CD8-positive, alpha-beta T cell (primary cell): ENCODE measurements at regions of chr1 and their contacts with region 1.

Region 1: DNA sequence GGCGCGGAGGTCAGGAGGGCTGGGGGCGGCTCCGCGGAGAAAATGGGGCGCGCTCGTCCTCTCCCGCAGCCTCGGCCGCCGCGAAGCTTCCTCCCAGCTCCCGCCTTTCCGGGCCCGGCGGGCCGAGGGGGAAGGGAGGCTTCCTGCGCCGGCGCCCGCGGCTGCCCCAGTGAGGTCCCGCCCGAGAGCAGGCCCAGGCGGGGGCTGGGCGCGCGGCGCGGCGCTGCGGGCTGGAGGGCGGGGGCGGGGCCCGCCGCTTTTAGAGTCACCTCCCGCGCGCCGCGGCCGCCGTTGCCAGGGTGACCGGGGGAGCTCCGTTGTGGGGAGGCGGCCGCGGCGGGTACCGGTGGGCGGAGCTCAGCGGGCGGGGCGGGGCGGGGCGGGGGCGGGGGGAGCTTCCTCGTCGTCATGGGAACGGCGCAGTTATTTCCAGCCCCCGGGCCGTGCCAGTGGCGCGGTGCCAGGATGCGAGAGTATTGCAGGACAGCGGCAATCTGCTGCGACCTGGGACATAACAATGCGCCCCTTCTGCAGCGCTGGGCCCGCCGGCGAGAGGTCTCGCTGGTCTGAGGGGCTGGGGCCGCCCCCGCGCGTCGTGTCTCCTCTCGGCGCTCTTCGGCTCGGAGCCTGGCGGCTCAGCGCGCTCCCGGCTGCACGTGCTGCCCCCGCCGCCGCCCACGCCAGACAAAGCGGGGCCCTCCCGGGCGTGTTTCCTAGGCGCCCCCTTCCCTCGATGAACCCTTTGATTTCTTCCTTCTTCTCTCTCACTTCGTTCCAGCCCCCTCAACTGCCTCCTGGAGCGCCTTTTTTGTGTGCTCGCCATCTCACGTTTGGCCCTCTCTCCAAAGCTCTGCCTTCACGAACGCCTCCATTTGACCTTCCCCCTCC is 16.9 kb downstream of the IER5 start:
- DNase-seq: peak; percentile 80 to 96 (median 94)
- ATAC-seq: peak; percentile 85
- H3K4me3 ChIP-seq: peak overlapping the region; percentile 61 to 76
- H3K4me3 Mint-ChIP-seq: peak overlapping the region; percentile 90
- H3K27ac ChIP-seq: peak overlapping the region; percentile 52 to 74
- H3K27ac Mint-ChIP-seq: peak overlapping the region; percentile 91
- H3K4me1 ChIP-seq: peaks cover 25% of the 10 kb centered on the region
- H3K4me1 Mint-ChIP-seq: peaks cover 40% of the 10 kb centered on the region
- H3K27me3 ChIP-seq: no peaks in the 10 kb centered on the region
- H3K27me3 Mint-ChIP-seq: no peaks in the 10 kb centered on the region
- CTCF ChIP-seq: no peak

Region 2: DNA sequence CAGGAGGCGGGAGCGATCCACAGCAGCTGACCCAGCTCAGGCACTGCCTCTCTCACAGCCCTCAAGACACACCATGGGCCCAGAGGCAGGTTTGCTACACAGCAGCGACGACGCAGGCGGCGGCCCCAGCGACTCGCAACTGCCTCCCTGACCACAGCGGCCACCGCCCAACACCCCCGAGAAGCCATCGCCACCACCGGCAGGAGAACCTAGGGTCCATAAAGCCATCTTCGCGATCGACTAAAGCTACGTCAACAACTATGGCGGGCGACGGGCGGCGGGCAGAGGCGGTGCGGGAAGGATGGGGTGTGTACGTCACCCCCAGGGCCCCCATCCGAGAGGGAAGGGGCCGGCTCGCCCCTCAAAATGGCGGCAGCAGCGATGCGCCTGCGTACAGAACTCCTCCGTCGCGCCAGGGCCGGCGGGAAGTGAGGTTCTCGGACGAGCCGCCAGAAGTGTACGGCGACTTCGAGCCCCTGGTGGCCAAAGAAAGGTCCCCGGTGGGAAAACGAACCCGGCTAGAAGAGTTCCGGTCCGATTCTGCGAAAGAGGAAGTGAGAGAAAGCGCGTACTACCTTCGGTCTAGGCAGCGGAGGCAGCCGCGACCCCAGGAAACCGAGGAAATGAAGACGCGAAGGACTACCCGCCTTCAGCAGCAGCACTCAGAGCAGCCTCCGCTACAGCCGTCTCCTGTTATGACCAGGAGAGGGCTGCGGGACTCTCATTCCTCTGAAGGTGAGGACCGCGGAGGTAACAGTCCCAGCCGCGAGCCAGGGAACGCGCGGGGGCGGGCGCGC is 1222.9 kb before region 1 on chr1 and contains the start of gene TOR1AIP1:
- CTCF ChIA-PET with region 1: no interaction called
- POLR2A ChIA-PET with region 1: no interaction called
- intact Hi-C with region 1: loop called in 1 of 2 experiments (anchors 5 kb)
- DNase-seq: peak; percentile 95 to 99 (median 97)
- ATAC-seq: peak; percentile 74
- H3K4me3 ChIP-seq: peak within 1 kb of the TSS; percentile 91 to 95
- H3K4me3 Mint-ChIP-seq: peak within 1 kb of the TSS; percentile 94
- H3K27ac ChIP-seq: peak within 1 kb of the TSS; percentile 98 to 99
- H3K27ac Mint-ChIP-seq: peak within 1 kb of the TSS; percentile 100
- H3K4me1 ChIP-seq: peaks cover 37% of the 10 kb centered on the region
- H3K4me1 Mint-ChIP-seq: peaks cover 59% of the 10 kb centered on the region
- H3K27me3 ChIP-seq: no peaks in the 10 kb centered on the region
- H3K27me3 Mint-ChIP-seq: no peaks in the 10 kb centered on the region
- CTCF ChIP-seq: peak; percentile 41
- total RNA-seq, gene TOR1AIP1: 108 to 110 TPM

Region 3: DNA sequence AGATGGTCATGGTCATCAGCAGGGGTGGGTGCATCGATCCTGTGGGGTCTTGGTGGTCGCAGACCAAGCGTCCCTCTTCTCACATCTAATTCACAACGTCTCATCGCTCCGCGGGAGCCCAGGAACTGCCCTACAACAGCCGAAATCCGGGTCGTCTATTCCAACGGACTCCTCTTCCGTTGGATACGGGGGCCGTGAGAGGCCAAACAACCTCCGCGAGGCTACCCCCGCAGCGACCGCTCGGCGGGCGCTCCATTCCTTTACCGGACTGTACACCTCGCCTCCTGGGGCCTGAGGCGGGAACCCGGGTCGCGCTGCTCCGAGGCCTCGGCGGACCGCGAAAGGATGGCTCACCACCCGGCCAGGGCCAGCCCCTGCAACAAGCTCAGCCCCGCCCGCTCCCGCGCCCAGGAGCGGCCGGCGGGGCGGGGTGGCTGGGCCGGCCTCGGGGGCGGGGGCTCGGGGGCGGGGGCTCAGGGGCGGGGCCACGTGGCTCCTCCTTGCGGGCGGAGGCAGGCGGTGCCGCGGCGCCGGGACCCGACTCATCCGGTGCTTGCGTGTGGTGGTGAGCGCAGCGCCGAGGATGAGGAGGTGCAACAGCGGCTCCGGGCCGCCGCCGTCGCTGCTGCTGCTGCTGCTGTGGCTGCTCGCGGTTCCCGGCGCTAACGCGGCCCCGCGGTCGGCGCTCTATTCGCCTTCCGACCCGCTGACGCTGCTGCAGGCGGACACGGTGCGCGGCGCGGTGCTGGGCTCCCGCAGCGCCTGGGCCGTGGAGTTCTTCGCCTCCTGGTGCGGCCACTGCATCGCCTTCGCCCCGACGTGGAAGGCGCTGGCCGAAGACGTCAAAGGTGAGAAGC is 950.8 kb before region 1 on chr1 and contains the start of gene QSOX1:
- CTCF ChIA-PET with region 1: no interaction called
- POLR2A ChIA-PET with region 1: interaction called, 3 read pairs
- intact Hi-C with region 1: loop called in 1 of 2 experiments (anchors 2 kb)
- DNase-seq: peak; percentile 77 to 95 (median 88)
- ATAC-seq: peak; percentile 96
- H3K4me3 ChIP-seq: peak within 1 kb of the TSS; percentile 86
- H3K4me3 Mint-ChIP-seq: peak within 1 kb of the TSS; percentile 91
- H3K27ac ChIP-seq: peak within 1 kb of the TSS; percentile 60 to 62
- H3K27ac Mint-ChIP-seq: peak within 1 kb of the TSS; percentile 87
- H3K4me1 ChIP-seq: peaks cover 22% of the 10 kb centered on the region
- H3K4me1 Mint-ChIP-seq: peaks cover 43% of the 10 kb centered on the region
- H3K27me3 ChIP-seq: no peaks in the 10 kb centered on the region
- H3K27me3 Mint-ChIP-seq: no peaks in the 10 kb centered on the region
- CTCF ChIP-seq: no peak
- total RNA-seq, gene QSOX1: 12.8 to 12.9 TPM

Region 4: DNA sequence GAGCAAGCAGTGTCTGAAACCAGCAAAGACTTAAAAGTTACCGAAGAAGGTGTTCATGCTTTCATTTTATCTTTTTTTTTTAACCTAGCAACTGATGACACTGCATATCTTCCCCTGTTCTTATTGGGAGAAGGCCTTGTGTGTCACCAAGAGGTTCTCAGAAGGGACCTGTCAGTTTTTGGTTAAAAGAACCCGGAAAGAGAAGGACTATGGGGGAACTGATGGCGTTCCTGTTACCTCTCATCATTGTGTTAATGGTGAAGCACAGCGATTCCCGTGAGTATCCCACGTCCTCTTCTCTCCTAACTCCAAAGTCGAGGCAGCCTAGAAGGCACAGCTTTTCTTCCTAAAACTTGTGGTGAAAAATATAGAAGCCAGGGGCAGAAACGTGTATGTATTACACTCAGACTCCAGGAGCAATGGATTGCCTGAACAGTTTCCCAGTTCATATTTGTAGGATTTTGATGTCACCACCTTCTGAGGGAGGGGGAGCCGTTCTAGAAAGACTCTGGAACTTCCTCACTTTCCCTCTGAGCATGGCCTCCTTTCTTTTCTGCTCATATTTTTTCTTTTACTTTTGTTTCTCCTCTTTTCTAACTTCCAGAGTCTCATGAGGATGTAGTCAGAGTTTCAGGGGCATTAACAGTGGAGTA is 71.5 kb before region 1 on chr1 and contains the start of gene MR1:
- CTCF ChIA-PET with region 1: interaction called, 4 read pairs
- POLR2A ChIA-PET with region 1: no interaction called
- intact Hi-C with region 1: loop called in 1 of 2 experiments (anchors 2 kb)
- DNase-seq: peak in 7 of 9 experiments; percentile 16 to 93 (median 48)
- ATAC-seq: peak; percentile 97
- H3K4me3 ChIP-seq: peak within 1 kb of the TSS; percentile 66 to 76
- H3K4me3 Mint-ChIP-seq: peak within 1 kb of the TSS; percentile 96
- H3K27ac ChIP-seq: peak within 1 kb of the TSS; percentile 85 to 99
- H3K27ac Mint-ChIP-seq: peak within 1 kb of the TSS; percentile 99
- H3K4me1 ChIP-seq: peaks cover 39% of the 10 kb centered on the region
- H3K4me1 Mint-ChIP-seq: peaks cover 55% of the 10 kb centered on the region
- H3K27me3 ChIP-seq: no peaks in the 10 kb centered on the region
- H3K27me3 Mint-ChIP-seq: no peaks in the 10 kb centered on the region
- CTCF ChIP-seq: no peak
- total RNA-seq, gene MR1: 15.4 to 16.0 TPM

Region 5: DNA sequence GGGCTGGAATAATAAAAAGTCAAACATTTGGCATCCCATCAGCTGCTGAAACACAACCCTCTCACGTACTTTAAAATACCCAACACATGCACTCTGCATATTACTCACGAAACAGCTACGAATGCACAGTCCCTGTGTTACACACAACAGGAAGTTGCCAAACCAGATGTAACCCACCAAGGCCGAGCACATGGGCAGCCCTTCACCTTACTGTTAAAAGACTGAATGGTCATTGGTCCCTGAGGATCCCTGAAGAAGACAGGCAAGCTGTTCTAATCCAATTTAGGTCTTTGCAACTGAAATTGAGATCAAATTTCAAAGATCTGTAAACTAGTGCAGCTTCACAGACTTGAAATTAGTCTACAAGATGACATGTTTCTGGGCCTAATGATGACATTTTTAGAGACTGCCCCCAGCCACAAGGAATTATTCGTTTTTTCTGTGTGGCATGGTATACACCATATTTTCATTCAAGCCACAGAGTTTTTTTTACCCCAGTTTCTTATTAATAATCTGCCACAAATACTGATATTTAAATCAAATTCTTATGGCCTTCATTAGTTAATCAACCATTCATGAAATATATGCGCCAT is 42.4 kb before region 1 on chr1:
- CTCF ChIA-PET with region 1: no interaction called
- POLR2A ChIA-PET with region 1: no interaction called
- intact Hi-C with region 1: no loop called
- DNase-seq: peak in 7 of 9 experiments; percentile 20 to 71 (median 29)
- ATAC-seq: peak; percentile 76
- H3K4me3 ChIP-seq: peak overlapping the region; percentile 40
- H3K4me3 Mint-ChIP-seq: peak overlapping the region; percentile 70
- H3K27ac ChIP-seq: peak overlapping the region; percentile 7 to 84
- H3K27ac Mint-ChIP-seq: peak overlapping the region; percentile 82
- H3K4me1 ChIP-seq: peaks cover 17% of the 10 kb centered on the region
- H3K4me1 Mint-ChIP-seq: peaks cover 24% of the 10 kb centered on the region
- H3K27me3 ChIP-seq: no peaks in the 10 kb centered on the region
- H3K27me3 Mint-ChIP-seq: no peaks in the 10 kb centered on the region
- CTCF ChIP-seq: no peak

Region 6: GRCh38 chr1:181117638-181118449 is 12.5 kb after region 1 on chr1:
- CTCF ChIA-PET with region 1: no interaction called
- POLR2A ChIA-PET with region 1: interaction called, 5 read pairs
- intact Hi-C with region 1: loop called in 1 of 2 experiments (anchors 1 kb)
- DNase-seq: no peak
- ATAC-seq: no peak
- H3K4me3 ChIP-seq: no peak overlapping the region
- H3K4me3 Mint-ChIP-seq: no peak overlapping the region
- H3K27ac ChIP-seq: no peak overlapping the region
- H3K27ac Mint-ChIP-seq: no peak overlapping the region
- H3K4me1 ChIP-seq: no peaks in the 10 kb centered on the region
- H3K4me1 Mint-ChIP-seq: no peaks in the 10 kb centered on the region
- H3K27me3 ChIP-seq: no peaks in the 10 kb centered on the region
- H3K27me3 Mint-ChIP-seq: no peaks in the 10 kb centered on the region
- CTCF ChIP-seq: no peak

Region 7: GRCh38 chr1:181166377-181167196 is 61.2 kb after region 1 on chr1:
- CTCF ChIA-PET with region 1: interaction called, 13 read pairs
- POLR2A ChIA-PET with region 1: interaction called, 4 read pairs
- intact Hi-C with region 1: no loop called
- DNase-seq: peak; percentile 51 to 87 (median 75)
- ATAC-seq: peak; percentile 99
- H3K4me3 ChIP-seq: peak overlapping the region; percentile 6 to 28
- H3K4me3 Mint-ChIP-seq: peak overlapping the region; percentile 73
- H3K27ac ChIP-seq: no peak overlapping the region
- H3K27ac Mint-ChIP-seq: no peak overlapping the region
- H3K4me1 ChIP-seq: peaks cover 5% of the 10 kb centered on the region
- H3K4me1 Mint-ChIP-seq: peaks cover 7% of the 10 kb centered on the region
- H3K27me3 ChIP-seq: no peaks in the 10 kb centered on the region
- H3K27me3 Mint-ChIP-seq: no peaks in the 10 kb centered on the region
- CTCF ChIP-seq: peak; percentile 93

Region 8: GRCh38 chr1:182029379-182030331 is 924.3 kb after region 1 on chr1:
- CTCF ChIA-PET with region 1: no interaction called
- POLR2A ChIA-PET with region 1: no interaction called
- intact Hi-C with region 1: loop called in 1 of 2 experiments (anchors 5 kb)
- DNase-seq: peak; percentile 96 to 99 (median 98)
- ATAC-seq: peak; percentile 93
- H3K4me3 ChIP-seq: peak overlapping the region; percentile 76 to 77
- H3K4me3 Mint-ChIP-seq: peak overlapping the region; percentile 93
- H3K27ac ChIP-seq: peak overlapping the region; percentile 68 to 84
- H3K27ac Mint-ChIP-seq: peak overlapping the region; percentile 98
- H3K4me1 ChIP-seq: peaks cover 16% of the 10 kb centered on the region
- H3K4me1 Mint-ChIP-seq: peaks cover 18% of the 10 kb centered on the region
- H3K27me3 ChIP-seq: no peaks in the 10 kb centered on the region
- H3K27me3 Mint-ChIP-seq: no peaks in the 10 kb centered on the region
- CTCF ChIP-seq: no peak